Naive thymus-derived CD4-positive, alpha-beta T cell (primary cell): ENCODE measurements at regions of chr7 and their contacts with region 1.

Region 1: GRCh38 chr7:38300175-38300574 is 26.7 kb upstream of the TARP start:
- DNase-seq: no peak
- ATAC-seq: peak; percentile 40
- H3K4me3 ChIP-seq: peak overlapping the region; percentile 50
- H3K4me3 Mint-ChIP-seq: peak overlapping the region; percentile 58 to 84 (median 81)
- H3K27ac ChIP-seq: peak overlapping the region; percentile 14
- H3K27ac Mint-ChIP-seq: peak overlapping the region in 8 of 9 donors; percentile 42 to 88 (median 70)
- H3K4me1 ChIP-seq: no peaks in the 10 kb centered on the region
- H3K4me1 Mint-ChIP-seq: peaks cover 0 to 10% (median 6%) of the 10 kb centered on the region in 7 donors
- H3K27me3 ChIP-seq: no peaks in the 10 kb centered on the region
- H3K27me3 Mint-ChIP-seq: no peaks in the 10 kb centered on the region

Region 2: GRCh38 chr7:38232502-38233366 is 67.4 kb before region 1 on chr7:
- CTCF ChIA-PET with region 1: no interaction called
- POLR2A ChIA-PET with region 1: no interaction called
- intact Hi-C with region 1: loop called in 1 of 2 experiments (anchors 5 kb)
- DNase-seq: peak; percentile 13 to 78 (median 47)
- ATAC-seq: peak; percentile 91
- H3K4me3 ChIP-seq: peak overlapping the region; percentile 2
- H3K4me3 Mint-ChIP-seq: peak overlapping the region; percentile 18 to 88 (median 67)
- H3K27ac ChIP-seq: peak overlapping the region; percentile 34
- H3K27ac Mint-ChIP-seq: peak overlapping the region; percentile 26 to 94 (median 89)
- H3K4me1 ChIP-seq: peaks cover 16 to 84% of the 10 kb centered on the region in 2 donors
- H3K4me1 Mint-ChIP-seq: peaks cover 17 to 72% (median 48%) of the 10 kb centered on the region in 7 donors
- H3K27me3 ChIP-seq: no peaks in the 10 kb centered on the region
- H3K27me3 Mint-ChIP-seq: no peaks in the 10 kb centered on the region

Region 3: DNA sequence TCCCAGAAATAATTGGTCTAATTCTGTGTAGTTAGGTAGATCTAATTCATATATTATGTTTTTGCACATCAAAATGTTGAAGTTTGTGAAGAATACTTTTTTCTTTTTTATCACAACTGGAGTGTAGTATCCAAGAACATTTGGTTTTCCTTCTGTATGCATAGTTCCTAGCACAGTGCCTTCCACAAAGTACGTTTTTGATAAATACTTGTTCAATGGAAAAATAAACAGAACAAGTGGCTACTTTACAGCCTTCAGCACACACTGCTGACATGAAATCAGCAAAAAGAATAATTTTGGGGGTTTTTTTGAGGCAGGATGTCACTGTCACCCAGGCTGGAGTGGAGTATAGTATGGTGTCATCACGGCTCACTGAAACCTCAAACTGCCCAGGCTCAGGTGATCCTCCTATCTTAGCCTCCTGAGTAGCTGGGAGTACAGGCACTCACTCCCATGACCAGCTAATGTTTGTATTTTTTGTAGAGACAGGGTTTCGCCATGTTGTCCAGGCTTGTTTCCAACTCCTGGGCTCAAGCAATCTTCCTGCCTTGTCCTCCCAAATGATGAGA is 54.7 kb before region 1 on chr7:
- CTCF ChIA-PET with region 1: no interaction called
- POLR2A ChIA-PET with region 1: no interaction called
- intact Hi-C with region 1: loop called in 1 of 2 experiments (anchors 2 kb)
- DNase-seq: no peak
- ATAC-seq: peak; percentile 41
- H3K4me3 ChIP-seq: no peak overlapping the region
- H3K4me3 Mint-ChIP-seq: no peak overlapping the region
- H3K27ac ChIP-seq: no peak overlapping the region
- H3K27ac Mint-ChIP-seq: peak overlapping the region in 2 of 9 donors; percentile 29 to 76
- H3K4me1 ChIP-seq: peaks cover 0 to 25% of the 10 kb centered on the region in 2 donors
- H3K4me1 Mint-ChIP-seq: peaks cover 0 to 26% (median 4%) of the 10 kb centered on the region in 7 donors
- H3K27me3 ChIP-seq: no peaks in the 10 kb centered on the region
- H3K27me3 Mint-ChIP-seq: peaks cover 0 to 2% (median 0%) of the 10 kb centered on the region in 5 donors

Region 4: GRCh38 chr7:38257350-38257677 is 42.9 kb before region 1 on chr7:
- CTCF ChIA-PET with region 1: no interaction called
- POLR2A ChIA-PET with region 1: no interaction called
- intact Hi-C with region 1: loop called in 1 of 2 experiments (anchors 2 kb)
- DNase-seq: no peak
- ATAC-seq: peak; percentile 46
- H3K4me3 ChIP-seq: no peak overlapping the region
- H3K4me3 Mint-ChIP-seq: no peak overlapping the region
- H3K27ac ChIP-seq: no peak overlapping the region
- H3K27ac Mint-ChIP-seq: peak overlapping the region in 1 of 9 donors; percentile 17
- H3K4me1 ChIP-seq: no peaks in the 10 kb centered on the region
- H3K4me1 Mint-ChIP-seq: peaks cover 0 to 14% (median 4%) of the 10 kb centered on the region in 7 donors
- H3K27me3 ChIP-seq: no peaks in the 10 kb centered on the region
- H3K27me3 Mint-ChIP-seq: no peaks in the 10 kb centered on the region

Region 5: GRCh38 chr7:38274486-38274885 is 25.7 kb before region 1 on chr7:
- CTCF ChIA-PET with region 1: no interaction called
- POLR2A ChIA-PET with region 1: interaction called, 4 read pairs
- intact Hi-C with region 1: loop called in 1 of 2 experiments (anchors 2 kb)
- DNase-seq: no peak
- ATAC-seq: peak; percentile 38
- H3K4me3 ChIP-seq: no peak overlapping the region
- H3K4me3 Mint-ChIP-seq: peak overlapping the region in 1 of 10 donors; percentile 55
- H3K27ac ChIP-seq: no peak overlapping the region
- H3K27ac Mint-ChIP-seq: no peak overlapping the region
- H3K4me1 ChIP-seq: no peaks in the 10 kb centered on the region
- H3K4me1 Mint-ChIP-seq: no peaks in the 10 kb centered on the region
- H3K27me3 ChIP-seq: no peaks in the 10 kb centered on the region
- H3K27me3 Mint-ChIP-seq: no peaks in the 10 kb centered on the region

Region 6: DNA sequence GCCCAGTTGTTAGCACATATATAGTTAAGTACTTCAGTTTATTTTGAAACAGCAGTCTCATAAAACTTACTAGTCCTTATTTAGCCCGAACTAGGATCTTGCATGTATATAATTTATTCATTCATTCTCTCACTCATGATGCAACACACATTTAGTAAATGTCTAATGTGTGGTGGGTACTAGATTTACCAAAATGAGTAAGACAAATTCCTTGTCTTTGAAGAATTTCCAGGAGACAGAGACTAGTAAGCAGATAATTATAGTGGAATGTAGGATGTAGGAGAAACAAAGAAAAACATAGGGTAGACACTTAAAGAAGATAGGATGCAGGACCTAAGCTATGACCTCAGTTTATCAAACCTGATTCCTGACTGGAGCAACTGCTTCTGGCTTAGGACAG is 451.2 kb after region 1 on chr7:
- CTCF ChIA-PET with region 1: no interaction called
- POLR2A ChIA-PET with region 1: no interaction called
- intact Hi-C with region 1: no loop called
- DNase-seq: no peak
- ATAC-seq: no peak
- H3K4me3 ChIP-seq: no peak overlapping the region
- H3K4me3 Mint-ChIP-seq: no peak overlapping the region
- H3K27ac ChIP-seq: no peak overlapping the region
- H3K27ac Mint-ChIP-seq: no peak overlapping the region
- H3K4me1 ChIP-seq: no peaks in the 10 kb centered on the region
- H3K4me1 Mint-ChIP-seq: no peaks in the 10 kb centered on the region
- H3K27me3 ChIP-seq: no peaks in the 10 kb centered on the region
- H3K27me3 Mint-ChIP-seq: no peaks in the 10 kb centered on the region